ENCODE measurements at regions of chr5 and their contacts with region 1.

Region 1: GRCh38 chr5:57298295-57298984 is 124.6 kb downstream of the GPBP1 start:
- DNase-seq: peak; percentile 90
- H3K4me3 ChIP-seq: 0 out of 2 replicates have a peak overlapping the region, but pooled peaks have one; percentile 11
- H3K27ac ChIP-seq: peak overlapping the region; percentile 12; the same call in 1 of the 2 replicates
- H3K4me1 ChIP-seq: peaks cover 14% of the 10 kb centered on the region
- H3K27me3 ChIP-seq: no peaks in the 10 kb centered on the region

Region 2: GRCh38 chr5:57488215-57488955 is 189.9 kb after region 1 on chr5:
- in situ Hi-C with region 1: loop called (anchors 10 kb)
- DNase-seq: peak; percentile 73
- H3K4me3 ChIP-seq: no peak overlapping the region
- H3K27ac ChIP-seq: peak overlapping the region; percentile 19; the same call in 1 of the 2 replicates
- H3K4me1 ChIP-seq: peaks cover 17% of the 10 kb centered on the region
- H3K27me3 ChIP-seq: no peaks in the 10 kb centered on the region

Region 3: DNA sequence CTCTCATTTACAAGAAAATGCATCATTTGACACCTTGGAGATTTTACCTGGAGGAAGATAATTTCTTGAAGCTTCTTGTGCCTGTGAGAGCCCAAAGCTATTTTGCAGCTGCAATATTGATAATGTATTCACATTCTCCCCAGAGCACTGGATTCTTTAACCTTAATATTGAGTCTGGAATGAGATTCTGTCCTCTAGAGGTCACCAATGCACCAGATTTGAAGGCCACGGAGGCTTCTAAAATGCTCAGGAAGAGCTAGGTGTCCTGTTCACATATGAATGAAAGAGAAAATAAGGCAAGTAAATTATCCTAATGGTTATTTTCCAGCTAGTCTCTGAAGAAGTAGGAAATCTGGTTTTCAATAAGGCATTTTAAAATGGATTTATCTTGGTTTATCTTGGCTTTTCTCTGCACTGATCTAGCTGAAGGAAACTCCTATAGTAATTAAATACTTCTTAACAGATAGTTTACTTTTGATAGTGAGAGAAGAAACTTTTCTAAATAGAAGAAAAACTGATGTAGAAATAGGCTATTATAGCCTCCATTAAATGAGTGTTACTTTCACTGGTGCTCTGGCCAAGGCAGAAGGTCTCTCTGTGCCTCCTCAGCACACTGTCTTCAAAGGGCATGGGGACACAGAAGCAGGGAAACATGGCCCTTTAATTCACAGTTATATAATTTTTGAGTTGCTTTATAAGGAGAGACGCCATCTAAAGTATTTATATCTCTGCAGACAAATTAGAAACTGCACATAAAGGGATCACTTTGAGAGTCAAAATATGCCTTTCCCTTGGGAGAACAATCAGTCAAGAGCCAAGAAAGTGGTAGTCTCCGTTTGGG is 481.2 kb after region 1 on chr5:
- in situ Hi-C with region 1: loop called (anchors 10 kb)
- DNase-seq: peak; percentile 82
- H3K4me3 ChIP-seq: no peak overlapping the region
- H3K27ac ChIP-seq: no peak overlapping the region
- H3K4me1 ChIP-seq: peaks cover 21% of the 10 kb centered on the region
- H3K27me3 ChIP-seq: no peaks in the 10 kb centered on the region

Region 4: DNA sequence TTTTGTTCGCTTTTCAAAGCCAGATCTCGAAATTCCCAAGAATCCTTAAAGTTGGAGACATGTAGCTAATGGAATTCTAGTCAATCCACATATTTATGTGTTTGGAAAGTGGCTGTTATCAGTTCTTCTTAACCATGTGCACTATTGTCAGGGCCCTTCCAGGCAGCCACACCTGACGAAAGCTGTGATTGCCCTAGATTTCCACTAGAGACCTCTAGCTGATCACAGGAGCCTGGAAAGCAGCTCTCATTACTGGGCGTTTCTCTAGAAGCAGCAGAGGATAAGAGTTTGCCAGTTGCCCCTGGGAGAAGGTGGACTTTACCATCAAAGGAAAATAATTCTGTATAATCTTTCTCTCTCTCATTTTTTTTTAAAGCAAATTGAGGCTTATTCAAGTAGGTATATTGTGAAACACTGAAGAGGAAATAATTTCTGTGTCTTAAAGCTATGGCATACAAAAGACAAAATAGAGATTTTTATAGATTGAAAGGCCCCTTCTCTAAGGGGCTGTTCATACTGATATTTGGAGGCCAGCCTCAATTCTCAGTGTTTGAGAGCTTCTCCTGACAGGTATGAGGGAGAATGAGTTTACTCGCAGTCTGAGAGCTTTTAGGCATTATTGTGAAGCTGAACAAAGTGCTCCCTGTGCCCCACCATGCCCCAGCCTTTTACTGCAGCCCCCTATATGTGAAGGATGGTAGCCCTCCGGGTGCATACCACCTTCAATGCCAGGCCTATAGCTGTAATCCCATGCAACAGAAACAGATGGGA is 589.6 kb after region 1 on chr5:
- in situ Hi-C with region 1: loop called (anchors 25 kb)
- DNase-seq: peak; percentile 71
- H3K4me3 ChIP-seq: no peak overlapping the region
- H3K27ac ChIP-seq: no peak overlapping the region
- H3K4me1 ChIP-seq: peaks cover 14% of the 10 kb centered on the region
- H3K27me3 ChIP-seq: no peaks in the 10 kb centered on the region